AG04449 (cell line): ENCODE measurements at regions of chr5 and their contacts with region 1.

Region 1: GRCh38 chr5:112902561-112902960 is 19.5 kb downstream of the REEP5 start:
- DNase-seq: no peak
- H3K4me3 ChIP-seq: no peak overlapping the region
- CTCF ChIP-seq: no peak

Region 2: GRCh38 chr5:112594095-112594850 is 308.3 kb before region 1 on chr5:
- CTCF ChIA-PET with region 1: no interaction called
- POLR2A ChIA-PET with region 1: no interaction called
- DNase-seq: no peak
- H3K4me3 ChIP-seq: no peak overlapping the region
- CTCF ChIP-seq: no peak

Region 3: GRCh38 chr5:112915831-112916230 is 13.3 kb after region 1 on chr5:
- CTCF ChIA-PET with region 1: interaction called, 10 read pairs
- POLR2A ChIA-PET with region 1: interaction called, 4 read pairs
- DNase-seq: no peak
- H3K4me3 ChIP-seq: no peak overlapping the region
- CTCF ChIP-seq: no peak